Activated CD4-positive, alpha-beta T cell treated with anti-CD3 and anti-CD28 coated beads for 36 hours (primary cell): ENCODE measurements at regions of chr2 and their contacts with region 1.

Region 1: DNA sequence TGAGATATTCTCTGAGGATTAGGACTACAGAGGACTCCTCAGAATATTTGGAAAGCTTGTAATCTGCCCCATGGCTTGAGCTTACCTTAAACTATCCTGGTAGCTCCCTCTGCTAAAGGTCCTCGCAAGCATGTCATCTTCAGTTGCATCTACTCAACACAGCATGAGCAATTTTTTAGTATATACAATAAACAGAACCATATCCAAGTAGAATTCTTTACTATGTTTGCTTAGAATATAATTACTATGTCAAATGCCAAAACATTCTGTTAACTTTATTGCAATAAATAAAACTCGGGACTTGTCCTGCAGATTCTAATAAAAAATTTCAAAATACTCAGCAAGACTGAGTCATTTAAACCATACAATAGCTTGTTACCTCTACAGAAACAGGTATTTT is 62.8 kb downstream of the ABCB11 start:
- DNase-seq: no peak
- ATAC-seq: no peak
- H3K4me3 Mint-ChIP-seq: no peak overlapping the region
- H3K27ac Mint-ChIP-seq: no peak overlapping the region
- H3K4me1 Mint-ChIP-seq: peaks cover 22% of the 10 kb centered on the region
- H3K27me3 Mint-ChIP-seq: no peaks in the 10 kb centered on the region

Region 2: DNA sequence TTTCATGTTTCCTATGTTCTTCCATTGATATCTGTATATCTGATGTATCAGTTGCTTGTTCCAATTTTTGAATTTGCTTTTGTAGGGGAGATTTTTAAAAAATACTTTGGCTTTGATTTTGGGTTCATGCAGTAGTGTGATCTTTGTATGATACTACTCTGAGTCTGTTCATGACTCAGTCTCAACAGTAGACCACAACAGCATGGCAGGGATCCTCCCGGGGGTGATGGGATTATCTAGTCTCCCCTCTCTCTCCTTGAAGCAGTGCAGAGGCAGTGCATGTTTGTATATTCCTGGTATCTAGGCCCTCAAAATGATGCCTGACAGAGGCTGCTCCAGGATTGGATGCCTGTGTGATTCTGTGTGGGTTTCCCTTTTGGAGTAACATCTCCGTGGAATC is 11.9 kb before region 1 on chr2:
- CTCF ChIA-PET with region 1: interaction called, 15 read pairs
- POLR2A ChIA-PET with region 1: no interaction called
- intact Hi-C with region 1: no loop called
- DNase-seq: no peak
- ATAC-seq: no peak
- H3K4me3 Mint-ChIP-seq: no peak overlapping the region
- H3K27ac Mint-ChIP-seq: no peak overlapping the region
- H3K4me1 Mint-ChIP-seq: peaks cover under 1% of the 10 kb centered on the region
- H3K27me3 Mint-ChIP-seq: peaks cover 12% of the 10 kb centered on the region

Region 3: GRCh38 chr2:169185711-169186110 is 217.4 kb after region 1 on chr2:
- CTCF ChIA-PET with region 1: no interaction called
- POLR2A ChIA-PET with region 1: no interaction called
- intact Hi-C with region 1: no loop called
- DNase-seq: no peak
- ATAC-seq: no peak
- H3K4me3 Mint-ChIP-seq: no peak overlapping the region
- H3K27ac Mint-ChIP-seq: no peak overlapping the region
- H3K4me1 Mint-ChIP-seq: no peaks in the 10 kb centered on the region
- H3K27me3 Mint-ChIP-seq: peaks cover 8% of the 10 kb centered on the region